SK-N-SH (cell line): ENCODE measurements at regions of chr10 and their contacts with region 1.

Region 1: GRCh38 chr10:76973515-76974278 is 663.9 kb downstream of the KCNMA1 start:
- DNase-seq: peak; percentile 46
- H3K4me3 ChIP-seq: no peak overlapping the region
- H3K27ac ChIP-seq: peak overlapping the region in 1 of 2 experiments; percentile 100; a peak in 2 of 4 replicates
- H3K4me1 ChIP-seq: peaks cover 0 to 76% of the 10 kb centered on the region in 2 experiments; a peak in 2 of 4 replicates
- H3K27me3 ChIP-seq: no peaks in the 10 kb centered on the region
- CTCF ChIP-seq: no peak
- EP300 ChIP-seq: peak in 1 of 2 experiments; percentile 92; a peak in 2 of 4 replicates
- RAD21 ChIP-seq: peak; percentile 12; the same call in 1 of the 2 replicates

Region 2: GRCh38 chr10:75401569-75402485 is 1571.9 kb before region 1 on chr10 and contains the start of gene ZNF503:
- CTCF ChIA-PET with region 1: no interaction called
- POLR2A ChIA-PET with region 1: interaction called, 11 read pairs
- DNase-seq: peak; percentile 95
- H3K4me3 ChIP-seq: peak within 1 kb of the TSS; percentile 82 to 96
- H3K27ac ChIP-seq: peak within 1 kb of the TSS; percentile 93 to 98
- H3K4me1 ChIP-seq: peaks cover 0 to 20% of the 10 kb centered on the region in 2 experiments; a peak in 2 of 4 replicates
- H3K27me3 ChIP-seq: no peaks in the 10 kb centered on the region
- CTCF ChIP-seq: 0 out of 2 replicates have a peak, but pooled peaks have one; percentile 14
- EP300 ChIP-seq: peak in 1 of 2 experiments; percentile 34; a peak in 2 of 4 replicates
- RAD21 ChIP-seq: peak; percentile 43
- polyA plus RNA-seq, gene ZNF503: 4.5 and 5.9 TPM in 2 replicates

Region 3: GRCh38 chr10:76547352-76547972 is 426.2 kb before region 1 on chr10:
- CTCF ChIA-PET with region 1: interaction called, 12 read pairs
- POLR2A ChIA-PET with region 1: interaction called, 58 read pairs
- DNase-seq: peak; percentile 60
- H3K4me3 ChIP-seq: no peak overlapping the region
- H3K27ac ChIP-seq: peak overlapping the region in 1 of 2 experiments; percentile 34; a peak in 2 of 4 replicates
- H3K4me1 ChIP-seq: peaks cover 10 to 38% of the 10 kb centered on the region in 2 experiments; a peak in 3 of 4 replicates
- H3K27me3 ChIP-seq: no peaks in the 10 kb centered on the region
- CTCF ChIP-seq: peak; percentile 88
- EP300 ChIP-seq: no peak
- RAD21 ChIP-seq: peak; percentile 95

Region 4: DNA sequence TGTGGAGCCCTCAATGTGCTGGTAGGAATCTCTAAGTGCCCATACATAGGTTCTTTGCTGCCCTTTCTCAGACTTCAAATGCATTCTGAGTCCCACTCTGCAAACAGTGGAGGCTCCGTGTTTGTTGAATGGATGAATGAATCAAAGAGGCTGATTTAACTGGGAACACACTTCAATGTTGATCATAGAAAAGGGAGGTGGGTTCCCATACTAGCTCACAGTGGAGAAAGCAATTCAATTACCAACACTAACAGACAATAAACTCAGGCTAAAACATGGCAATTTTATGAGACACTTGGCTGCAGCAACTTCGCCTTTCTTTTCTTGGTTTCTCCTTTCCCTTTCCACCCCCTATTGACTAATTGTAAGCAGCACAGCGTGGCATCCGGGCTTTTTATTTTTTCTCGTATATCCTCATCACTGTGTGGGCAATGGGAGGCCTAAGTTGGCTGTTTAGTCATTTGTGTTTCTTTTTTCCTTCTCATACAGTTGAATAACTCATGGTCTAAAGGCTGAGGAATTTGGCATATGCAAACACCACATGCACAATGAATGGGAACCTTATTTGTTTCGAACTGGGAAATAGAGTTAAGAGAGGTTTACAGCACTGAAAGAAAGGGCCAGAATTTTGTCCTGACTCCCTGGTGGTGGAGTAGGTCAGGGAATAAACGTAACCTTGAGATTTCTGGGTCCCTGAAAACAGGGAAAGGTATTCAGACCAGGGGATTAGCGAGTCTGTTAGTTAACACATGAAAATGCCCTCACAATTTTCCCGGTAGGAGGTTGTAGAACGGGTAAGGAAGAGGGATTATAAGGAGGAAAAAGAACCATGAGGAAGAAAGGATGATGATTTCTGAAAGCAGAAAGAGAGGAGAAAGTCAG is 194.5 kb before region 1 on chr10:
- CTCF ChIA-PET with region 1: interaction called, 5 read pairs
- POLR2A ChIA-PET with region 1: interaction called, 13 read pairs
- DNase-seq: no peak
- H3K4me3 ChIP-seq: no peak overlapping the region
- H3K27ac ChIP-seq: peak overlapping the region in 1 of 2 experiments; percentile 79; a peak in 2 of 4 replicates
- H3K4me1 ChIP-seq: peaks cover 0 to 10% of the 10 kb centered on the region in 2 experiments; a peak in 2 of 4 replicates
- H3K27me3 ChIP-seq: no peaks in the 10 kb centered on the region
- CTCF ChIP-seq: no peak
- EP300 ChIP-seq: no peak
- RAD21 ChIP-seq: peak; percentile 39

Region 5: GRCh38 chr10:76905251-76905650 is 68.4 kb before region 1 on chr10:
- CTCF ChIA-PET with region 1: interaction called, 9 read pairs
- POLR2A ChIA-PET with region 1: interaction called, 16 read pairs
- DNase-seq: no peak
- H3K4me3 ChIP-seq: no peak overlapping the region
- H3K27ac ChIP-seq: peak overlapping the region in 1 of 2 experiments; percentile 99; a peak in 2 of 4 replicates
- H3K4me1 ChIP-seq: peaks cover 0 to 27% of the 10 kb centered on the region in 2 experiments; a peak in 2 of 4 replicates
- H3K27me3 ChIP-seq: no peaks in the 10 kb centered on the region
- CTCF ChIP-seq: no peak
- EP300 ChIP-seq: no peak
- RAD21 ChIP-seq: no peak

Region 6: GRCh38 chr10:76984559-76985443 is 11.1 kb after region 1 on chr10:
- CTCF ChIA-PET with region 1: interaction called, 49 read pairs
- POLR2A ChIA-PET with region 1: interaction called, 11 read pairs
- DNase-seq: peak; percentile 57
- H3K4me3 ChIP-seq: peak overlapping the region in 1 of 2 experiments; percentile 17; a peak in 1 of 4 replicates
- H3K27ac ChIP-seq: peak overlapping the region in 1 of 2 experiments; percentile 90; a peak in 2 of 4 replicates
- H3K4me1 ChIP-seq: peaks cover 0 to 21% of the 10 kb centered on the region in 2 experiments; a peak in 2 of 4 replicates
- H3K27me3 ChIP-seq: no peaks in the 10 kb centered on the region
- CTCF ChIP-seq: peak; percentile 99
- EP300 ChIP-seq: peak in 1 of 2 experiments; percentile 44; a peak in 1 of 4 replicates
- RAD21 ChIP-seq: peak; percentile 95